CD8-positive, alpha-beta T cell (primary cell): ENCODE measurements at regions of chr10 and their contacts with region 1.

Region 1: DNA sequence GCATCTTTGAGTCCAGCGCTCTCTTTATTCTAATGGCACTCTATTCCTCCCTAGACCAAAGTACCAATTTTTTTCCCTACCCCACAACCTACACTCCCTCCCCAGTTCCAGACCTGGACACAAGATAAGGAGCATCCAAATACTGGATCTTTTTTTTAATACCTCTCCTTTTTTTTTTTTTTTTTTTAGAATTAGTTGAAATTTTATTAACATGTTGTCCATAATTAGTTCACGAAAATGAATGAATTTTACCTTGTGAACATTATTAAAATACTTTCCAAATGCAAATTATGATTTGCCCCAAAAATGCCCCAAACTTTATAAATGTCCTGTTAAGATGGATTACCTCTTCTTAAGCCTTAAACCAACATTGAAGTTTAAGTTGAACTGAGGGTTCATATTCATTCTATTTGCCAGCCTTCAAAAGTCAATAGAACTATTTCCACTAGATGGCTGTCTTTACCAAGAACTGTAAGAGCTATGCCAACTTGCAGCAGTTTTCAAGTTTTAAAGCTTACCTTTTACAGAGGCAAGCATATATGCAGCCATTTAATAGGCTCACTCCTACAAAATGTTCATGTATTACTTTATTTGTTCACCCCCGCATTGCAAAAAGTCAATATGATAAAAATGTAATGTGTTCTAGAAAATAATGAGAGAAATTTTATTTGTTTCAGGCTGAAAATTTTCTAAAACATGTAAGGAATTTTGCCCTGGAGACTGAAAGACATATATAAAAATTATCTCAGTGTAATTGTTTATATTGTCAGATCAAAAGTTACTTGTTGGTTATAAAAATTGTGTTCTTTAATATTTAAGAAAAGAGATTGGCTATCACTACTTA is 39.7 kb upstream of the TNKS2 start:
- DNase-seq: peak in 2 of 9 experiments; percentile 67 to 77
- ATAC-seq: peak; percentile 78
- H3K4me3 ChIP-seq: no peak overlapping the region
- H3K4me3 Mint-ChIP-seq: no peak overlapping the region
- H3K27ac ChIP-seq: no peak overlapping the region
- H3K27ac Mint-ChIP-seq: no peak overlapping the region
- H3K4me1 ChIP-seq: no peaks in the 10 kb centered on the region
- H3K4me1 Mint-ChIP-seq: peaks cover 5% of the 10 kb centered on the region
- H3K27me3 ChIP-seq: no peaks in the 10 kb centered on the region
- H3K27me3 Mint-ChIP-seq: peaks cover 11% of the 10 kb centered on the region
- CTCF ChIP-seq: peak; percentile 74

Region 2: DNA sequence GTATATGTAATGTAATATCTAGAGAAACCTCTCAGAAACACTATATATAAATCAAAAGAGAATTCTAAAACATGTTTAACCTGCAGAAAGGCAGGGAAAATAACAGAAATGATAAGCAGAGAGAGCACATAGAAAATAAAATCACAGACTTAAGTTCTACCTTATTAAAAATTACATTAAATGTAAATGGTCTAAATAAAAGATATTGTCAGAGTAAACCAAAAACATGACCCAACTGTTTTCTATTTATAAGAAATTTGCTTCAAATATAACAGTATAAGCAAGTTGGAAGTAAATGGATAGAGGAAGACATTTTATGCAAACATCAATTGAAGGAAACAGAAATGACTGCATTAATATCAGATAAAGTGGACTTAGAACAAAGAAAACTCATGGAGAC is 305.0 kb before region 1 on chr10:
- CTCF ChIA-PET with region 1: no interaction called
- POLR2A ChIA-PET with region 1: no interaction called
- intact Hi-C with region 1: no loop called
- DNase-seq: no peak
- ATAC-seq: no peak
- H3K4me3 ChIP-seq: no peak overlapping the region
- H3K4me3 Mint-ChIP-seq: no peak overlapping the region
- H3K27ac ChIP-seq: no peak overlapping the region
- H3K27ac Mint-ChIP-seq: no peak overlapping the region
- H3K4me1 ChIP-seq: no peaks in the 10 kb centered on the region
- H3K4me1 Mint-ChIP-seq: no peaks in the 10 kb centered on the region
- H3K27me3 ChIP-seq: no peaks in the 10 kb centered on the region
- H3K27me3 Mint-ChIP-seq: no peaks in the 10 kb centered on the region
- CTCF ChIP-seq: no peak

Region 3: DNA sequence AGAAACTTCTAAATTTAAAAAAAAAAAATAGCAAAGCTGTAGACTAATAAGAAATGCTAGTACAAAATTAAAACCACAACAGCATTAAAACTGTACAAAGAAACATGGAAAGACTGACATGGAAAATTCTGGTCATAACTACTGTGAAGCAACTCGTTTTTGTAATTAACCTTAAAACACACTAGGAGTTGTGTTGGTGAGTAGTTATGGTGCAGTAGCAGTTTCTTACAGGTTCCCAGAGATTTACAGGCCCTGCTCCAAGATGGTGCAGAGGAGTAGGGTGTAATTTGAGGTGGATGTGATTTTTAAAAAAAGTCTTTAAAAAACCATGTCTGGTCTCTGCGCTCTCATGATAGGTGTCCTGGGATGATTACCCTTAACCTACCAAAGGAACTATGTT is 70.7 kb after region 1 on chr10:
- CTCF ChIA-PET with region 1: interaction called, 6 read pairs
- POLR2A ChIA-PET with region 1: no interaction called
- intact Hi-C with region 1: loop called in 1 of 2 experiments (anchors 5 kb)
- DNase-seq: no peak
- ATAC-seq: no peak
- H3K4me3 ChIP-seq: no peak overlapping the region
- H3K4me3 Mint-ChIP-seq: no peak overlapping the region
- H3K27ac ChIP-seq: no peak overlapping the region
- H3K27ac Mint-ChIP-seq: no peak overlapping the region
- H3K4me1 ChIP-seq: no peaks in the 10 kb centered on the region
- H3K4me1 Mint-ChIP-seq: no peaks in the 10 kb centered on the region
- H3K27me3 ChIP-seq: no peaks in the 10 kb centered on the region
- H3K27me3 Mint-ChIP-seq: no peaks in the 10 kb centered on the region
- CTCF ChIP-seq: no peak

Region 4: GRCh38 chr10:91856637-91857036 is 98.1 kb after region 1 on chr10:
- CTCF ChIA-PET with region 1: no interaction called
- POLR2A ChIA-PET with region 1: no interaction called
- intact Hi-C with region 1: loop called in 1 of 2 experiments (anchors 5 kb)
- DNase-seq: peak in 3 of 9 experiments; percentile 19 to 34 (median 34)
- ATAC-seq: no peak
- H3K4me3 ChIP-seq: no peak overlapping the region
- H3K4me3 Mint-ChIP-seq: no peak overlapping the region
- H3K27ac ChIP-seq: no peak overlapping the region
- H3K27ac Mint-ChIP-seq: no peak overlapping the region
- H3K4me1 ChIP-seq: no peaks in the 10 kb centered on the region
- H3K4me1 Mint-ChIP-seq: no peaks in the 10 kb centered on the region
- H3K27me3 ChIP-seq: no peaks in the 10 kb centered on the region
- H3K27me3 Mint-ChIP-seq: no peaks in the 10 kb centered on the region
- CTCF ChIP-seq: no peak

Region 5: GRCh38 chr10:91923371-91924211 is 165.1 kb after region 1 on chr10 and contains the start of gene BTAF1:
- CTCF ChIA-PET with region 1: interaction called, 13 read pairs
- POLR2A ChIA-PET with region 1: interaction called, 4 read pairs
- intact Hi-C with region 1: no loop called
- DNase-seq: peak; percentile 82 to 97 (median 93)
- ATAC-seq: peak; percentile 94
- H3K4me3 ChIP-seq: peak within 1 kb of the TSS; percentile 87 to 97
- H3K4me3 Mint-ChIP-seq: peak within 1 kb of the TSS; percentile 99
- H3K27ac ChIP-seq: peak within 1 kb of the TSS; percentile 92 to 97
- H3K27ac Mint-ChIP-seq: peak within 1 kb of the TSS; percentile 98
- H3K4me1 ChIP-seq: peaks cover 36% of the 10 kb centered on the region
- H3K4me1 Mint-ChIP-seq: peaks cover 50% of the 10 kb centered on the region
- H3K27me3 ChIP-seq: peaks cover 0 to 2% of the 10 kb centered on the region in 2 experiments
- H3K27me3 Mint-ChIP-seq: peaks cover 2% of the 10 kb centered on the region
- CTCF ChIP-seq: no peak
- total RNA-seq, gene BTAF1: 88.6 to 90.7 TPM

Region 6: GRCh38 chr10:92432596-92432995 is 674.1 kb after region 1 on chr10:
- CTCF ChIA-PET with region 1: no interaction called
- POLR2A ChIA-PET with region 1: no interaction called
- intact Hi-C with region 1: loop called in 1 of 2 experiments (anchors 5 kb)
- DNase-seq: no peak
- ATAC-seq: no peak
- H3K4me3 ChIP-seq: no peak overlapping the region
- H3K4me3 Mint-ChIP-seq: no peak overlapping the region
- H3K27ac ChIP-seq: no peak overlapping the region
- H3K27ac Mint-ChIP-seq: no peak overlapping the region
- H3K4me1 ChIP-seq: no peaks in the 10 kb centered on the region
- H3K4me1 Mint-ChIP-seq: no peaks in the 10 kb centered on the region
- H3K27me3 ChIP-seq: no peaks in the 10 kb centered on the region
- H3K27me3 Mint-ChIP-seq: no peaks in the 10 kb centered on the region
- CTCF ChIP-seq: no peak